K562 (cell line): ENCODE measurements at regions of chr10 and their contacts with region 1.

Region 1: GRCh38 chr10:95693668-95694534 is at the start of gene TCTN3:
- DNase-seq: peak; percentile 97 to 98 (median 98)
- ATAC-seq: peak; percentile 100
- H3K4me3 ChIP-seq: peak within 1 kb of the TSS; percentile 88
- H3K27ac ChIP-seq: peak within 1 kb of the TSS; percentile 66
- H3K4me1 ChIP-seq: peaks cover 0 to 2% of the 10 kb centered on the region in 2 experiments; a peak in 2 of 5 replicates
- H3K27me3 ChIP-seq: no peaks in the 10 kb centered on the region
- CTCF ChIP-seq: peak; percentile 97 to 99 (median 99)
- EP300 ChIP-seq: no peak; the same call in 1 of the 2 replicates
- POLR2A ChIP-seq: peak; percentile 73; the same call in 1 of the 2 replicates
- RAD21 ChIP-seq: peak; percentile 97 to 99
- polyA plus RNA-seq, gene TCTN3: 16.3 to 24.3 TPM

Region 2: DNA sequence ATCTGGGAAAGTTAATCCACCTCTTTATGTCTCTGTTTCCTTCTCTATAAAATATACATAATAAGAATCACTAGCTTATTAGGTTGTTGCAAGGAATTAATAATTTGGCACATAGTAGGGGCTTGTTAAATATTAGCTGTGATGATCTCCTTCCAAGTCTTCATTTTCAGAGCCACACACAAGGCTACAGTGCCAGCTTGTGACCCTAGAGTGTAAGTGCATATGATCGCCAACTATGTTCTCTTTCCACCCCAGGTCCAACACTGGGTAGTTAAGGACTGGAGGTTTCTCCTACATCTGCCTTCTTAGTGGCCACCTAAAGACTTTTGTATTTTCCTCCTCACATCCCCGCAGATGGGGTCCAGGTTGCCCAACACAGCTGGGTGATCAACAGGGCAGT is 517.8 kb before region 1 on chr10:
- CTCF ChIA-PET with region 1: no interaction called
- POLR2A ChIA-PET with region 1: no interaction called
- in situ Hi-C with region 1: no loop called
- intact Hi-C with region 1: no loop called
- DNase-seq: no peak
- ATAC-seq: no peak
- H3K4me3 ChIP-seq: no peak overlapping the region
- H3K27ac ChIP-seq: no peak overlapping the region
- H3K4me1 ChIP-seq: no peaks in the 10 kb centered on the region
- H3K27me3 ChIP-seq: no peaks in the 10 kb centered on the region
- CTCF ChIP-seq: no peak
- EP300 ChIP-seq: no peak
- POLR2A ChIP-seq: no peak
- RAD21 ChIP-seq: no peak

Region 3: DNA sequence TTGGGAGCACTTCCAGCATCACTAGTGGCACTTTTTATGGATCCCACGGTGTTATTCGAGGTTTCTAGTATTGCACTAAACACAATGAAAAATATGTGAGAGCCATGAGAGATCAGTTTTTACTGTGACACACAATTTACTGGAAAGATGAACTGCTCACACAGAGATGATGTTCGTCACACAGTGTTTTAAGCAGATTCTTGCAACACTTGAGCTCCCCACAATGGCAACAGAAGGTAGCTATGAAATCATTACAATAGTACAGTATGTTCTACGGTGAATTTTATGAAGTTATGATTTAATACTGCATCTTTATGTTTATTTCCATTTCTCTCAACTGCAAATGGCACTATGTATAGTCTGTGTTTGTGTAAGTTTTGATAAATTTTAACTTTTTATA is 34.6 kb after region 1 on chr10:
- CTCF ChIA-PET with region 1: interaction called, 3 read pairs
- POLR2A ChIA-PET with region 1: no interaction called
- in situ Hi-C with region 1: no loop called
- intact Hi-C with region 1: loop called (anchors 1 kb)
- DNase-seq: peak in 1 of 4 experiments; percentile 31
- ATAC-seq: peak; percentile 72
- H3K4me3 ChIP-seq: no peak overlapping the region
- H3K27ac ChIP-seq: no peak overlapping the region
- H3K4me1 ChIP-seq: no peaks in the 10 kb centered on the region; a peak in 1 of 5 replicates
- H3K27me3 ChIP-seq: no peaks in the 10 kb centered on the region
- CTCF ChIP-seq: peak in 2 of 3 experiments; percentile 19 to 29; a peak in 3 of 6 replicates
- EP300 ChIP-seq: no peak
- POLR2A ChIP-seq: no peak
- RAD21 ChIP-seq: peak in 1 of 2 experiments; percentile 57; a peak in 2 of 4 replicates

Region 4: DNA sequence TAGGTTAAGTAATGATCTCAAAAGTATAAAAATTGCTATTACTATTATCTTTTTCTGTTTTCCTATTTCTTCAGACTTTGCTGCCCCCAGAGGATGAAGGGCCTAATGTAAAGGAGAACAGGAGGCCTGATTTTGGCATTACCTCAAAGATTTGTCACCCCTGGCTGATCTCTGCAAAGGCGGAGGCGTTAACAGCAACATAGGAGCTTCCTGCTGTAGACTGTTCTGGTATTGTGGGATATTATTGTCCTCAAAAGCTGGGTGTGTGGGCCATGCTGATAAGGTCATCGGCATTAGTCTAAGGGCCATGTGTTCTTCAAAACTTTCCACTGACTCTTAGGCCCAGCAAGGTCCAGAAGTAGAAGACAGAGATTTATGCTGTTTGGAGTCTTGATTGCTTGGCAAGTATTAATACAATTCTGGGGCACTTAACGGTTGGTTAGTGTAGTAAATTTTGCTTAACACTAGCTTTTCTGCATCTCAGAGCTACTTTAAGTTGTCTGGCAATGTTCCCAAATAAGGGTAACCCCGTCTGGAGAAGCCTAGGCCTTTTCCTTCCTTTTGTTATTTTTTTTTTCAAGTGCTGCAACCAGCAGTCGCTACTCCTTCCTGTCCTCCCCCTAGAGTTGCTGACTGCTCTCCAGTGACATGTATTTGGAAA is 48.0 kb after region 1 on chr10:
- CTCF ChIA-PET with region 1: no interaction called
- POLR2A ChIA-PET with region 1: no interaction called
- in situ Hi-C with region 1: no loop called
- intact Hi-C with region 1: loop called (anchors 5 kb)
- DNase-seq: peak; percentile 17 to 78 (median 42)
- ATAC-seq: peak; percentile 95
- H3K4me3 ChIP-seq: no peak overlapping the region
- H3K27ac ChIP-seq: no peak overlapping the region
- H3K4me1 ChIP-seq: no peaks in the 10 kb centered on the region
- H3K27me3 ChIP-seq: no peaks in the 10 kb centered on the region
- CTCF ChIP-seq: peak; percentile 25 to 37 (median 27); a peak in 3 of 6 replicates
- EP300 ChIP-seq: peak; percentile 67
- POLR2A ChIP-seq: no peak
- RAD21 ChIP-seq: no peak

Region 5: GRCh38 chr10:95841661-95842498 is 148.0 kb after region 1 on chr10:
- CTCF ChIA-PET with region 1: interaction called, 20 read pairs
- POLR2A ChIA-PET with region 1: no interaction called
- in situ Hi-C with region 1: loop called (anchors 5 kb)
- intact Hi-C with region 1: loop called (anchors 1 kb)
- DNase-seq: peak; percentile 31 to 66 (median 38)
- ATAC-seq: peak; percentile 89
- H3K4me3 ChIP-seq: no peak overlapping the region
- H3K27ac ChIP-seq: no peak overlapping the region
- H3K4me1 ChIP-seq: no peaks in the 10 kb centered on the region
- H3K27me3 ChIP-seq: no peaks in the 10 kb centered on the region
- CTCF ChIP-seq: peak; percentile 55 to 70 (median 61); a peak in 5 of 6 replicates
- EP300 ChIP-seq: no peak
- POLR2A ChIP-seq: no peak
- RAD21 ChIP-seq: peak; percentile 72 to 86

Region 6: DNA sequence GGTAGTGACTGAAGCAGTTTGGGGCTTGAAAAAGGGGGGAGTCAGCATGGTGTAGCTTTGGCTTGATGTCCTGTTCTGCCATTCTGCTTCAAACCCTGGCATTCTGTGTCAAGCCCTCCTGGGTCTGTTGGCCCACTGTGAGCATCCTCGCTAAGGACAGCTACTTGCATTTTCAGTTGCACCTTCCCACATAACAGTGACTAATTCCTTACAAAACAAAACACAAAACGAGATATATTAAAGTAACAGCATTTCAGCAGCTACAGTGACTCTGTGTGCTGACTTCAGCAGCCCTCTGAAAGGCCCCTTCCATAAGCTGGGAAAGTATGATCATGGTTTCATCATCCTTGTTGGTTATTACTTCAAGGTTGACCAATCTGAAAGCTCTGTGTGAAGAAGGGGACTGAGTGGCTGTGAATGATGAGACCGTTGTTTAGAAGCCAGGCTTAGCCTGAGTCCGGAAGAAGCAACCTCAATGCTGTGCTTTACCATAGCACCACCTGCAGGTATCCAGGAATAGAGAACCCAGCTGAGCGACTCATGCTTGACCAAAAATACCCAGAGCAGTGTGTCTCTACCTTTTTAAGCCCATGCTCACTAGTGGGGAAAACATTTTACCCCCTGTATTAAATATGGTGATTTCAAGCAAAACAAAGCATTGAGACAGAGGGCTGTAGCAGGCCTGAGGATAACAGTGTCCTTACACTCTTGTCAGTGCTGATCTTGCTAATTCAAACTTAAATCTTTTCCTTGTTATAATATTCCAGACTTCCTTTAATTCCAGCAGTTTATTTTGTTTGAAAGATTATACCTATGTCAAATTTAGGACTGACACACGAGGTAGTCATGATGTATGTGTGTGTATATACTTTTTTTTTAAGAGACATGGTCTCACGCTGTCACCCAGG is 171.3 kb after region 1 on chr10:
- CTCF ChIA-PET with region 1: interaction called, 21 read pairs
- POLR2A ChIA-PET with region 1: no interaction called
- in situ Hi-C with region 1: no loop called
- intact Hi-C with region 1: loop called (anchors 2 kb)
- DNase-seq: peak; percentile 32 to 59 (median 36)
- ATAC-seq: peak; percentile 96
- H3K4me3 ChIP-seq: no peak overlapping the region
- H3K27ac ChIP-seq: no peak overlapping the region
- H3K4me1 ChIP-seq: no peaks in the 10 kb centered on the region
- H3K27me3 ChIP-seq: no peaks in the 10 kb centered on the region
- CTCF ChIP-seq: peak; percentile 59 to 69 (median 69)
- EP300 ChIP-seq: no peak
- POLR2A ChIP-seq: no peak
- RAD21 ChIP-seq: peak; percentile 72 to 80